ENCODE measurements at regions of chr3 and their contacts with region 1.

Region 1: GRCh38 chr3:101803173-101803782 is 24.3 kb downstream of the NXPE3 start:
- DNase-seq: peak; percentile 86

Region 2: DNA sequence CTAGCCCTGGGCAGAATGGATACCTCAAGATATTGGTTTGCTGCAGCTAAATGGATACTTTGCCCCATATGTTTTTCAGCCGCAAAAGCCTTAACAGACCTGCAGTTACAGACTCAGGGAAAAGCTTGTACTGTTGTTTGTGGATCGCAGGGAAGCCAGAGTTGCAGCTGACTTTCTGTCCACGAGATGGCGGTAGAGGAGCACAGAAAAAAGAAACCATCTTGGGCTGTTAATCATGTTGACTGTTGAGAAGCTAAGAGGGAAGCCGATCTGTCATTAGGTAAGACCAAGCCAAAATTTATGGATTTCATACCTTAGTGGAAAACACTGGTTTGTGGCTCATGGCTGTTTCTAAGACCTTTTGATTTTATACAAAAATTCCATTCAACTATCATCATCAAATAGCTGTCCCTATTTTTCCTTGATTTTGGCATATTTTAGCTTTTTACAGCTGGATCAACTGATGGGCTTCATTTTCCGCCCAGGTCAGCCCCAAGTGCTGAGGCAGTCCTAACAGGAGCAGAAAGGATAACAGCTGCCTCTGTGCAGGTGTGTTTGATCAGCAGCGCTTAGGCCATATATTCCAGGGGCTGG is 425.9 kb after region 1 on chr3:
- in situ Hi-C with region 1: loop called (anchors 25 kb)
- DNase-seq: peak; percentile 72

Measured in G401 (cell line).